HepG2 (cell line): ENCODE measurements at regions of chr14 and their contacts with region 1.

Region 1: DNA sequence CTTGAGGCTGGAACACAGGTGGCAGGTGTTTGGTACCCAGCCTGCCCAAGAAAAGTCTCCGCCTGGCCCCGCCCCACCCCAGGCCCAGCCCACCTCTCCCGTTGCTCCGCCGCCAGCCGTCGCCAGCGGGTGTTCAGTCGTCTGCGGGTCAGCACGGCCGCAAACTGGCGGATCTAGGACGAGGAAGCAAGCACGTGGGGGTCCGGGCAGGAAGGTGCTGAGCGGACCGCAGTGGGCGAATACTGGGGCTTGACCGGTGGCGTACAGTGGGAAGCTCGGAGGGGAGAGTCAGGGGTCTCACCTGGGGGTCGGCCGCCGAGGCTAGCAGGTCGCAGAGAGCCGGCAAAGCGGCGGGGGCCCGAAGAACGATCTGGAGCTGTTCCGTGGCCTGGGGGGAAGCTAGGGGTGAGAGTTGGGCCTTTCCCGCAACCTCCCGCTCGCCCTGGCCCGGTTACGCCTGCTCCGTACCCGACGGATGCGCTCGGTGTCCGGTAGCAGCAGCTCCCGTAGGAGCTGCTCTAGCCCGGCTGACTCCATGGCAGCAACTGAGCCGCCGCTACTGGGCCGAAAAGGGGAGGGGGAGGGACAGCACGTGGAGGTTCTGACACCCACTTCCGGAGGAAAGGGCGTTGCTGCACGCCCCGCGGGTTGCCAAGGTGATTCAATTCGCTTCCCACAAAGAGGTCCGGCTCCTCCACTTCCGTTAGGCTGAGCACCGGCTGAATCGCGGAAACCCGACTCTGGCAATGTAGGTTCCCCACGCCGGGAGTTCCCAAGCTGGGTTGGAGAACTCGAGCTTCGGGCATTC is at the start of gene IPO4:
- DNase-seq: peak; percentile 100
- ATAC-seq: peak; percentile 88
- H3K4me3 ChIP-seq: peak within 1 kb of the TSS; percentile 70 to 92 (median 77)
- H3K27ac ChIP-seq: peak within 1 kb of the TSS; percentile 64
- H3K4me1 ChIP-seq: peaks cover 42% of the 10 kb centered on the region
- H3K27me3 ChIP-seq: no peaks in the 10 kb centered on the region
- CTCF ChIP-seq: peak; percentile 49
- EP300 ChIP-seq: peak; percentile 85 to 87; a peak in 3 of 4 replicates
- POLR2A ChIP-seq: peak in 1 of 2 experiments; percentile 98; a peak in 2 of 4 replicates
- RAD21 ChIP-seq: peak; percentile 77
- total RNA-seq, gene IPO4: 149 and 179 TPM in 2 replicates

Region 2: GRCh38 chr14:24135834-24136542 is 52.5 kb before region 1 on chr14 and contains the start of gene PSME1:
- CTCF ChIA-PET with region 1: no interaction called
- POLR2A ChIA-PET with region 1: interaction called, 38 read pairs
- in situ Hi-C with region 1: no loop called
- intact Hi-C with region 1: no loop called
- DNase-seq: peak; percentile 93
- ATAC-seq: peak; percentile 86
- H3K4me3 ChIP-seq: peak within 1 kb of the TSS; percentile 91 to 98 (median 93)
- H3K27ac ChIP-seq: peak within 1 kb of the TSS; percentile 75
- H3K4me1 ChIP-seq: peaks cover 64% of the 10 kb centered on the region
- H3K27me3 ChIP-seq: no peaks in the 10 kb centered on the region; a peak in 1 of 5 replicates
- CTCF ChIP-seq: peak; percentile 47; the same call in 1 of the 2 replicates
- EP300 ChIP-seq: peak; percentile 23 to 43; a peak in 1 of 4 replicates
- POLR2A ChIP-seq: peak in 1 of 2 experiments; percentile 31; a peak in 1 of 4 replicates
- RAD21 ChIP-seq: peak; percentile 71
- total RNA-seq, gene PSME1: 608 and 713 TPM in 2 replicates

Region 3: DNA sequence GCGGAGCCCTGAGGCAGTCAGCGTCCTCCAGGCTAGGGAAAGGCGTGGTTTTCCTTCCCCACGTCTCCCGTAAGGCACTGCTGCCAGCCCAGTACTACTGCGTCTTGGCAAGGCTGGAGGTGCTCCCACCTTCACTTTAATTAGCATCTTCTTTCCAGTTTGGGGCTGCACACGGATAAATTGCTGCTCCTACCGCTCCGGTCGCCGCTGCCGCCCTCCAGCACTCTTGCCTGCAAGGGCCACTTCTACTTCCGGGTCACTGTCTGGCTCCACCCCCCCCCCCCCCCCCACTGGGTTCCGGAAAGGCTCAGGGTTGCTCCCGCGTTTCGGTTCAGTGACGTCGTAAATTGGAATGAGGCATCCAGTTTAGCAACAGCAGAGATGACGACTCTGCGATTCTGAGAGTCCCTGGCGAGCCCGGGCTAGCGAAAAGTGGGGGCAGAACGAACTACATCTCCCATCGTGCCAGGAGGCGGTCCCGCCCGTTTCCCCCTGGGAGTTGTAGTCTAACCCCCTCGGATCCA is 43.7 kb after region 1 on chr14 and contains the start of gene NEDD8:
- CTCF ChIA-PET with region 1: no interaction called
- POLR2A ChIA-PET with region 1: interaction called, 7 read pairs
- in situ Hi-C with region 1: no loop called
- intact Hi-C with region 1: loop called (anchors 2 kb)
- DNase-seq: peak; percentile 99
- ATAC-seq: peak; percentile 85
- H3K4me3 ChIP-seq: peak within 1 kb of the TSS; percentile 83 to 91 (median 85)
- H3K27ac ChIP-seq: peak within 1 kb of the TSS; percentile 84
- H3K4me1 ChIP-seq: peaks cover 47% of the 10 kb centered on the region
- H3K27me3 ChIP-seq: peaks cover 0 to 4% of the 10 kb centered on the region in 2 experiments; a peak in 1 of 5 replicates
- CTCF ChIP-seq: no peak; the same call in none of the 2 replicates
- EP300 ChIP-seq: no peak; a peak in 1 of 4 replicates
- POLR2A ChIP-seq: peak in 1 of 2 experiments; percentile 63; a peak in 2 of 4 replicates
- RAD21 ChIP-seq: no peak; the same call in 1 of the 2 replicates
- total RNA-seq, gene NEDD8: 713 and 818 TPM in 2 replicates

Region 4: GRCh38 chr14:24695265-24696241 is 507.1 kb after region 1 on chr14:
- CTCF ChIA-PET with region 1: no interaction called
- POLR2A ChIA-PET with region 1: no interaction called
- in situ Hi-C with region 1: no loop called
- intact Hi-C with region 1: no loop called
- DNase-seq: no peak
- ATAC-seq: no peak; the same call in 2 of the 3 replicates
- H3K4me3 ChIP-seq: no peak overlapping the region
- H3K27ac ChIP-seq: no peak overlapping the region
- H3K4me1 ChIP-seq: no peaks in the 10 kb centered on the region
- H3K27me3 ChIP-seq: peaks cover under 1 to 2% of the 10 kb centered on the region in 2 experiments; a peak in 2 of 5 replicates
- CTCF ChIP-seq: no peak
- EP300 ChIP-seq: no peak
- POLR2A ChIP-seq: no peak
- RAD21 ChIP-seq: no peak